Heart left ventricle (tissue), 16 donors: ENCODE measurements at regions of chr10 and their contacts with region 1.

Region 1: GRCh38 chr10:6088721-6089390 is at the start of gene RBM17:
- DNase-seq: peak; percentile 94 to 98 (median 96)
- ATAC-seq: peak; percentile 71 to 97 (median 92)
- H3K4me3 ChIP-seq: peak within 1 kb of the TSS; percentile 78 to 95 (median 92)
- H3K27ac ChIP-seq: peak within 1 kb of the TSS; percentile 81 to 95 (median 91)
- H3K4me1 ChIP-seq: peaks cover 7 to 64% (median 49%) of the 10 kb centered on the region in 12 donors
- H3K27me3 ChIP-seq: no peaks in the 10 kb centered on the region
- CTCF ChIP-seq: peak; percentile 99 to 100 (median 100)
- POLR2A ChIP-seq: peak in 1 of 2 donors; percentile 73
- total RNA-seq, gene RBM17: 29.2 to 83.9 (median 60.2) TPM

Region 2: GRCh38 chr10:5862360-5862961 is 226.4 kb before region 1 on chr10:
- intact Hi-C with region 1: no loop called
- DNase-seq: no peak
- ATAC-seq: peak in 1 of 4 donors; percentile 31
- H3K4me3 ChIP-seq: no peak overlapping the region
- H3K27ac ChIP-seq: no peak overlapping the region
- H3K4me1 ChIP-seq: no peaks in the 10 kb centered on the region
- H3K27me3 ChIP-seq: no peaks in the 10 kb centered on the region
- CTCF ChIP-seq: no peak
- POLR2A ChIP-seq: no peak

Region 3: DNA sequence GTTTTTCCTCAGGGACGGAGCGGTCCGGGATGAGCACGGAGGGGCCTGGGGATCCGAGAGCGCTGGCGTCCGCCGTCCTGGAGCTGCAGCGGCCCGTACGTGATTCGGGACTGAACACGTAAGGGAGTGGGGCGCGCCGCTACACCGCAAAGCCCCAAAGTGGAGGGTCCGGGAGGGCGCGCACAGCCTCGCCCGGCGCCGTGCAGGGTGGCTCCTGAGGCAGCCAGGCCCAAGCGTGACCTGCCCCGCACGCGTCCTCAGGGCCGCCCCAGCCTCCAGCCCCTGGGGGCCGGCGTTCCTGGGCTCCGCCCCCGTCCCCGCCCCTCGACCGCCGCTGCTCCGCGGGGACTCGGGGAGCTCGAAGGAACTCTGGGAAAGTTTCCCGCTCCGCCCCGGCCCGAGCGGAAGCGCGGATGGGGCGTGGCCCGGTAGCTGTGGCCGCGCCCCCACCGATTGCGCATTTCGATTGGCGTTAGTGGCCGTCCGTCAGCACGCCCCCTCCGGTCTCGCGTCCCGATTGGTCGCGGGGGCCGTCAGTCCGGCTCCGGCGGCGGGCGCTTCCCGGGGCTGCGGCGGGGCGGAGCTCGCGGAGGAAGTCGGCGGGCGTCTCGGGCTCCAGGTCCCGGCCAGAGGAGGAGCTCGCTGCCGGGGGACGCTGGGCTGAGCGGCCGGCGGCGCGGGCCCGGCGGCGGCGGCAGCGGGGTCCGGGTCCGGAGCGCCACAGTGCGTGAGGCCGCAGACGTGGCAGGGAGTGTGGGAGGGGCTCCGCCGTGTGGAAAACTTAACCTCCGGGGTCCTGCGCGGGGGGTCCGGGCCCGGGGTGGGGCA is 199.0 kb before region 1 on chr10 and contains the starts of genes ANKRD16 and FBH1:
- intact Hi-C with region 1: loop called in 2 of 10 experiments (anchors 5 to 10 kb)
- DNase-seq: peak; percentile 99 to 100 (median 99)
- ATAC-seq: peak; percentile 94 to 97 (median 94)
- H3K4me3 ChIP-seq: peak within 1 kb of the TSS; percentile 62 to 99 (median 84)
- H3K27ac ChIP-seq: peak within 1 kb of the TSS; percentile 76 to 92 (median 87)
- H3K4me1 ChIP-seq: peaks cover 0 to 68% (median 53%) of the 10 kb centered on the region in 12 donors
- H3K27me3 ChIP-seq: no peaks in the 10 kb centered on the region
- CTCF ChIP-seq: peak in 1 of 12 donors; percentile 6
- POLR2A ChIP-seq: peak; percentile 67 to 81
- total RNA-seq, gene ANKRD16: 1.7 to 5.0 (median 2.9) TPM
- total RNA-seq, gene FBH1: 57.4 to 111 (median 83.5) TPM

Region 4: GRCh38 chr10:6014241-6014761 is 74.6 kb before region 1 on chr10:
- intact Hi-C with region 1: loop called in 8 of 10 experiments (anchors 2 to 10 kb)
- DNase-seq: peak in 2 of 5 donors; percentile 44 to 58
- ATAC-seq: peak in 3 of 4 donors; percentile 20 to 64 (median 50)
- H3K4me3 ChIP-seq: no peak overlapping the region
- H3K27ac ChIP-seq: peak overlapping the region in 2 of 12 donors; percentile 1 to 2
- H3K4me1 ChIP-seq: peaks cover 0 to 16% (median 5%) of the 10 kb centered on the region in 12 donors
- H3K27me3 ChIP-seq: no peaks in the 10 kb centered on the region
- CTCF ChIP-seq: peak; percentile 71 to 86 (median 75)
- POLR2A ChIP-seq: no peak

Region 5: GRCh38 chr10:6144406-6145165 is 55.7 kb after region 1 on chr10:
- intact Hi-C with region 1: loop called in 2 of 10 experiments (anchors 1 to 10 kb)
- DNase-seq: peak; percentile 92 to 96 (median 94)
- ATAC-seq: peak; percentile 68 to 97 (median 94)
- H3K4me3 ChIP-seq: peak overlapping the region; percentile 54 to 97 (median 88)
- H3K27ac ChIP-seq: peak overlapping the region in 11 of 12 donors; percentile 77 to 94 (median 89)
- H3K4me1 ChIP-seq: peaks cover 0 to 67% (median 12%) of the 10 kb centered on the region in 12 donors
- H3K27me3 ChIP-seq: no peaks in the 10 kb centered on the region
- CTCF ChIP-seq: peak in 3 of 12 donors; percentile 11 to 40 (median 35)
- POLR2A ChIP-seq: peak in 1 of 2 donors; percentile 91

Region 6: GRCh38 chr10:6202684-6203330 is 114.0 kb after region 1 on chr10 and contains the start of gene PFKFB3:
- intact Hi-C with region 1: loop called in 1 of 10 experiments (anchors 2 kb)
- DNase-seq: peak; percentile 96 to 99 (median 97)
- ATAC-seq: peak; percentile 95
- H3K4me3 ChIP-seq: peak within 1 kb of the TSS; percentile 66 to 89 (median 78)
- H3K27ac ChIP-seq: peak within 1 kb of the TSS; percentile 61 to 99 (median 94)
- H3K4me1 ChIP-seq: peaks cover 0 to 59% (median 30%) of the 10 kb centered on the region in 12 donors
- H3K27me3 ChIP-seq: no peaks in the 10 kb centered on the region
- CTCF ChIP-seq: peak in 11 of 12 donors; percentile 96 to 99 (median 98)
- POLR2A ChIP-seq: peak; percentile 89 to 99
- total RNA-seq, gene PFKFB3: 8.4 to 53.1 (median 15.1) TPM